Colonic mucosa (tissue), 4 donors: ENCODE measurements at regions of chr11 and their contacts with region 1.

Region 1: GRCh38 chr11:130213143-130213978 is 53.8 kb downstream of the ST14 start:
- DNase-seq: peak; percentile 75
- H3K4me3 ChIP-seq: no peak overlapping the region
- H3K27ac ChIP-seq: no peak overlapping the region
- H3K4me1 ChIP-seq: no peaks in the 10 kb centered on the region
- H3K27me3 ChIP-seq: no peaks in the 10 kb centered on the region
- CTCF ChIP-seq: peak; percentile 96

Region 2: GRCh38 chr11:130427581-130428315 is 214.4 kb after region 1 on chr11:
- intact Hi-C with region 1: loop called (anchors 5 kb)
- DNase-seq: no peak
- H3K4me3 ChIP-seq: peak overlapping the region; percentile 33
- H3K27ac ChIP-seq: no peak overlapping the region
- H3K4me1 ChIP-seq: no peaks in the 10 kb centered on the region
- H3K27me3 ChIP-seq: peaks cover 38% of the 10 kb centered on the region
- CTCF ChIP-seq: no peak

Region 3: DNA sequence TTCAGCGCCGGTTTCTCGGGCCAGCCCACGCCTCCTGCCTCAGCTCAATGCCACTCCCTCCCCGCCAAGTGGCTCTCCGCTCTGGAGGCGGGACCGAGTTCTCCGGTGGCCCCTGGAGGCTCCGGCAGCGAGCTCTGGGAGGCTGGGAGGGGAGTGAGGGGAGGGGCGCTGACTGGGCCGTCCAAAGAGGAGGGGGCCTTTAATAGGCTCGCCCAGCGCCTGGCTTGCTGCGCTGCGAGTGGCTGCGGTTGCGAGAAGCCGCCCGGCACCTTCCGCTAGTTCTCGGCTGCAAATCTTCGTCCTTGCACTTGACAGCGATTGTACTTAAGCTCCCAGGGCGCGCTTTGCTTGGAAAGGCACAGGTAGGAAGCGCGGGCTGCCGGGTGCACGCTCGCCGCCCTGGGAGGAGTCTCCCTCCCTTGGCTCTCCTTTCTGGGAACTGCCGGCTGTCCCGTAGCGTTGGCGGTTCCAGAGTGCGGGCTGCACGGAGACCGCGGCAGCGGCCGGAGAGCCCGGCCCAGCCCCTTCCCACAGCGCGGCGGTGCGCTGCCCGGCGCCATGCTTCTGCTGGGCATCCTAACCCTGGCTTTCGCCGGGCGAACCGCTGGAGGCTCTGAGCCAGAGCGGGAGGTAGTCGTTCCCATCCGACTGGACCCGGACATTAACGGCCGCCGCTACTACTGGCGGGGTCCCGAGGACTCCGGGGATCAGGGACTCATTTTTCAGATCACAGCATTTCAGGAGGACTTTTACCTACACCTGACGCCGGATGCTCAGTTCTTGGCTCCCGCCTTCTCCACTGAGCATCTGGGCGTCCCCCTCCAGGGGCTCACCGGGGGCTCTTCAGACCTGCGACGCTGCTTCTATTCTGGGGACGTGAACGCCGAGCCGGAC is 235.3 kb after region 1 on chr11 and contains the start of gene ADAMTS15:
- intact Hi-C with region 1: no loop called
- DNase-seq: peak; percentile 87
- H3K4me3 ChIP-seq: peak within 1 kb of the TSS; percentile 42
- H3K27ac ChIP-seq: peak within 1 kb of the TSS; percentile 64
- H3K4me1 ChIP-seq: peaks cover 7% of the 10 kb centered on the region
- H3K27me3 ChIP-seq: no peaks in the 10 kb centered on the region
- CTCF ChIP-seq: no peak
- total RNA-seq, gene ADAMTS15: 4.0 to 9.9 TPM

Region 4: GRCh38 chr11:130553306-130553705 is 339.9 kb after region 1 on chr11:
- intact Hi-C with region 1: no loop called
- DNase-seq: no peak
- H3K4me3 ChIP-seq: no peak overlapping the region
- H3K27ac ChIP-seq: no peak overlapping the region
- H3K4me1 ChIP-seq: no peaks in the 10 kb centered on the region
- H3K27me3 ChIP-seq: no peaks in the 10 kb centered on the region
- CTCF ChIP-seq: no peak

Region 5: DNA sequence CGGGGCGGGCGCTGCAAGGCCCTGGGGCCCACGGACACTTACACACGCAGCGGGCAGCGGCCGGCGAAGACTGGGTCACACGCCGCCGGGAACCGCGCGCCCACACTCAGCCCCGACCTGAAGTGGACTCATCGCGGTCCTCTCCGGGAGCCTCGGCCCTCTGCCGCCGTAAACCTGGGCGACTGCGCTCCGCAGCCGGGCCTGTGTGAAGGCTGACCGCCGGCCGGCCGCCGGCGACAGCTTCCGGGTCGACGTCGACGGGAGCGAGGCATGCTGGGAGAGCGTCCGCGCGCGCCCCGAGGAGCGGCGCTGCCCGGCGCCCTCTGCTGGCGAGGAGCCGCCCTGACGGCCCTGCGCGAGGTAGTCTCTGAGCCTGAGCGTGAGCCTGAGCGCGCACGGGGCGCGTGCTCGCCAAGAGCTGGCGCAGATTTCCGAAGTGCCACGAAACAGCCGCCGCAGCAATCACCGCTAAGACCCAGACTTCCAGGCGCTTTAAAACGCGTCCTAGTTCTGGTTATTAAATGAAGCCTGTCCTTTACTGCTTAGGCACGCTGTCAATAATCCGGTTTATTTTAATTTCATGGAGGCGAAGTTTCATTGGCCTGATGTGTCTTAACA is 703.0 kb after region 1 on chr11 and contains the start of gene SNX19:
- intact Hi-C with region 1: loop called (anchors 10 kb)
- DNase-seq: peak; percentile 93
- H3K4me3 ChIP-seq: peak within 1 kb of the TSS; percentile 99
- H3K27ac ChIP-seq: peak within 1 kb of the TSS; percentile 77
- H3K4me1 ChIP-seq: peaks cover 6% of the 10 kb centered on the region
- H3K27me3 ChIP-seq: no peaks in the 10 kb centered on the region
- CTCF ChIP-seq: peak; percentile 93
- total RNA-seq, gene SNX19: 43.4 to 57.4 TPM